Activated B cell treated with CpG ODN at 0.5 μM for 24 hours (primary cell): ENCODE measurements at regions of chr1 and their contacts with region 1.

Region 1: DNA sequence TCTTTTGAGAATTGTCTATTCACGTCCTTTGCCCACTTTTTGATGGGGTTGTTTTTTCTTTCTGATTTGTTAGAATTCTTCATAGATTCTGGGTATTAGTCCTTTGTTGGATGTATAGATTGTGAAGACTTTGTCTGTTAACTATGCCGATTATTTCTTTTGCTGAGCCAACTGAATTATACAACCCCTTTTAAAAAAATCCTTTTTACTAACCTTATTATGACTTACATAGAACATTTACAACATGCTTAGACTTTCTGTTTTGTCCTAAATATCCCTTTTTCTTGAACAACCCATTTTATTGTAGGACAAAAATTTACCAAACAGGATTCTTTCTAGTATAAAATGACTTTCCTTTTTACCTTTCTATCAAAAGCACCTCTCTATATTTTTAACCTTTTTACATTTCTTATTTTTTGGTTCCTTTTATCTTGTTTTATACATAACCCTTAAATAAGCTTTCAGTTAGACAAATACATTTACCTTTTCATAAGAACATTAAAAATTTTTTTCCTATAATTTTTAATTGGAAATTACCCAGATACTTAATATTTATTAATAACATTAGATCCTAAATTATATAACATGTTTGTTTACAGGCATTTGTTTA is 70.4 kb upstream of the TTLL7 start:
- DNase-seq: no peak
- ATAC-seq: no peak
- H3K4me3 Mint-ChIP-seq: no peak overlapping the region
- H3K27ac Mint-ChIP-seq: no peak overlapping the region
- H3K4me1 Mint-ChIP-seq: no peaks in the 10 kb centered on the region
- H3K27me3 Mint-ChIP-seq: peaks cover 12% of the 10 kb centered on the region
- CTCF ChIP-seq: no peak

Region 2: GRCh38 chr1:82614090-82614489 is 1455.3 kb before region 1 on chr1:
- CTCF ChIA-PET with region 1: no interaction called
- POLR2A ChIA-PET with region 1: no interaction called
- intact Hi-C with region 1: loop called (anchors 5 kb)
- DNase-seq: no peak
- ATAC-seq: no peak
- H3K4me3 Mint-ChIP-seq: no peak overlapping the region
- H3K27ac Mint-ChIP-seq: no peak overlapping the region
- H3K4me1 Mint-ChIP-seq: no peaks in the 10 kb centered on the region
- H3K27me3 Mint-ChIP-seq: no peaks in the 10 kb centered on the region
- CTCF ChIP-seq: no peak

Region 3: GRCh38 chr1:84174051-84174556 is 104.8 kb after region 1 on chr1:
- CTCF ChIA-PET with region 1: no interaction called
- POLR2A ChIA-PET with region 1: no interaction called
- intact Hi-C with region 1: no loop called
- DNase-seq: no peak
- ATAC-seq: no peak
- H3K4me3 Mint-ChIP-seq: no peak overlapping the region
- H3K27ac Mint-ChIP-seq: no peak overlapping the region
- H3K4me1 Mint-ChIP-seq: peaks cover 36% of the 10 kb centered on the region
- H3K27me3 Mint-ChIP-seq: no peaks in the 10 kb centered on the region
- CTCF ChIP-seq: no peak